ENCODE measurements at regions of chr11 and their contacts with region 1.

Region 1: DNA sequence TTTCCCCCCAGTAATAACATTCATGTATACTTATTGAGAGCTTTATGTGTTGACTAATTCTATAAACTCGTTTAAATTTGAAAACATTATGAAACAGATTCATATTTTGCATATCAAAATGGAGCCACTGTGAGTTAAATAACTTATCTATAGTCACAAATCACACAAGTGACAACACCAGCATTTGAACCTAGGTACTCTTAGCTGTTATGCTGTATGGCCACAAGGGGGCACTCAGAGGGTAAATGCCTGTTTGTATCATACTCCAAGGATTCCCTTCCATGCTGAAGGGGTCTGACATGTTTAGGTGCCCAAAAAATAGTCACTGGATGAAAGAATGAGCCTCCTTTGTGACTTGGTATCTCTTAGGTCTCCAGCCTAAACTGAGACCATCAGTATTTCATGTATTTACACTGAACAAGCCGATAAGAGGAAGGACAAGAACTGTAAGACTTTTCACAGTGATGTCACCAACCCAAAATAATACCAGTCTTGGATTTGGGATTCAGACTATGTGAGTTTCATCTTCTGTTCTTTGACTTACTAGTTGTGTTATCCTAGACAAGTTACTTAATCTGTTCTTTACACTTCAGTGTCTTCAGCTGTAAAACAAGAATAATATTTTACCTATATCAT is 12.2 kb upstream of the OR52D1 start:
- DNase-seq: peak; percentile 63
- ATAC-seq: peak; percentile 77
- H3K4me3 ChIP-seq: no peak overlapping the region
- H3K27ac ChIP-seq: no peak overlapping the region
- H3K4me1 ChIP-seq: no peaks in the 10 kb centered on the region
- H3K27me3 ChIP-seq: peaks cover 9% of the 10 kb centered on the region; the same call in 1 of the 2 replicates
- CTCF ChIP-seq: peak; percentile 85

Region 2: GRCh38 chr11:5553347-5553746 is 77.0 kb after region 1 on chr11:
- CTCF ChIA-PET with region 1: interaction called, 4 read pairs
- POLR2A ChIA-PET with region 1: no interaction called
- intact Hi-C with region 1: loop called (anchors 2 kb)
- DNase-seq: peak; percentile 7
- ATAC-seq: no peak
- H3K4me3 ChIP-seq: no peak overlapping the region
- H3K27ac ChIP-seq: no peak overlapping the region
- H3K4me1 ChIP-seq: peaks cover 12% of the 10 kb centered on the region
- H3K27me3 ChIP-seq: 0 out of 2 replicates have a peak, but pooled peaks cover 7% of the 10 kb centered on the region
- CTCF ChIP-seq: peak; percentile 52

Region 3: GRCh38 chr11:5712507-5712906 is 236.2 kb after region 1 on chr11:
- CTCF ChIA-PET with region 1: no interaction called
- POLR2A ChIA-PET with region 1: no interaction called
- intact Hi-C with region 1: loop called (anchors 2 kb)
- DNase-seq: peak; percentile 52
- ATAC-seq: peak; percentile 43
- H3K4me3 ChIP-seq: no peak overlapping the region
- H3K27ac ChIP-seq: no peak overlapping the region
- H3K4me1 ChIP-seq: no peaks in the 10 kb centered on the region
- H3K27me3 ChIP-seq: peaks cover 9% of the 10 kb centered on the region
- CTCF ChIP-seq: peak; percentile 60

Region 4: GRCh38 chr11:5891216-5891800 is 415.0 kb after region 1 on chr11:
- CTCF ChIA-PET with region 1: no interaction called
- POLR2A ChIA-PET with region 1: no interaction called
- intact Hi-C with region 1: loop called (anchors 5 kb)
- DNase-seq: peak; percentile 23
- ATAC-seq: no peak
- H3K4me3 ChIP-seq: no peak overlapping the region
- H3K27ac ChIP-seq: no peak overlapping the region
- H3K4me1 ChIP-seq: no peaks in the 10 kb centered on the region
- H3K27me3 ChIP-seq: peaks cover 5% of the 10 kb centered on the region; the same call in 1 of the 2 replicates
- CTCF ChIP-seq: peak; percentile 31; the same call in 1 of the 2 replicates